AG04449 (cell line): ENCODE measurements at regions of chr22 and their contacts with region 1.

Region 1: GRCh38 chr22:41589391-41590241 is at the start of gene PMM1:
- DNase-seq: peak; percentile 95
- H3K4me3 ChIP-seq: peak within 1 kb of the TSS; percentile 97
- CTCF ChIP-seq: no peak

Region 2: DNA sequence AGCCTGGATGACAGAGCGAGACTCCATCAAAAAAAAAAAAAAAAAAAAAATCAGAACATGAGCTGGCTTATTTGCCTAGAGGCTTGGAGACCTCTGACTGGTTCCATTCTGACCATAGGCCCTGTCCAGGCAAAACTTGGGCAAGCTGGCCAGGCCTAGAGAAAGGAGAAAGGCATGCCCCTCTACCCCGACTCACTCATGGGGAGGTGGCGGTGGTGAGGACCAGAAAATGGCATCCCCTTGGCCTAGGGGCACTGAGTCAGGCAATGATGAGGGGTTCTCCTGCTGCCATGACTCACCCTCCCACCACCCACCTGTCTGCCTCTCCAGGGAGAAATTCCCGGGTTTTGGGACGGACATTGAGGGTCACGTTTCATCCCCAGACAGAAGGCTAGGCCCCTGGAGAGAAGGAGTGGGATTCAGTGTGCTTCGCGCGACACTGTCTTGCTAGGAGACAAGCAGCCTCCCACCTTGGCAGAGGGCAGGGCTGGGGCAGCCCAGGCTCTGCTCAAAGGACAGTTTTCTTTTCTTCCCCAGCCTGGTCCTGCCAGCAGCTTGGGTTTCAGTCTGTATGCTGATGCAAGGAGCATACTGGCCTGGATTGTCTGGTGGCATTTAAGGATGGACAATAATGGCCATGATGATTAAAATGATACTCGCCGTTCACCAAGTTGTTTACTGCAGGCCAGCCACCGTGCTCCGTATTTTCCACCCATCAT is 160.2 kb before region 1 on chr22:
- CTCF ChIA-PET with region 1: no interaction called
- POLR2A ChIA-PET with region 1: no interaction called
- DNase-seq: no peak
- H3K4me3 ChIP-seq: no peak overlapping the region
- CTCF ChIP-seq: no peak

Region 3: GRCh38 chr22:41557401-41558240 is 32.0 kb before region 1 on chr22:
- CTCF ChIA-PET with region 1: interaction called, 7 read pairs
- POLR2A ChIA-PET with region 1: interaction called, 17 read pairs
- DNase-seq: no peak
- H3K4me3 ChIP-seq: no peak overlapping the region
- CTCF ChIP-seq: no peak

Region 4: DNA sequence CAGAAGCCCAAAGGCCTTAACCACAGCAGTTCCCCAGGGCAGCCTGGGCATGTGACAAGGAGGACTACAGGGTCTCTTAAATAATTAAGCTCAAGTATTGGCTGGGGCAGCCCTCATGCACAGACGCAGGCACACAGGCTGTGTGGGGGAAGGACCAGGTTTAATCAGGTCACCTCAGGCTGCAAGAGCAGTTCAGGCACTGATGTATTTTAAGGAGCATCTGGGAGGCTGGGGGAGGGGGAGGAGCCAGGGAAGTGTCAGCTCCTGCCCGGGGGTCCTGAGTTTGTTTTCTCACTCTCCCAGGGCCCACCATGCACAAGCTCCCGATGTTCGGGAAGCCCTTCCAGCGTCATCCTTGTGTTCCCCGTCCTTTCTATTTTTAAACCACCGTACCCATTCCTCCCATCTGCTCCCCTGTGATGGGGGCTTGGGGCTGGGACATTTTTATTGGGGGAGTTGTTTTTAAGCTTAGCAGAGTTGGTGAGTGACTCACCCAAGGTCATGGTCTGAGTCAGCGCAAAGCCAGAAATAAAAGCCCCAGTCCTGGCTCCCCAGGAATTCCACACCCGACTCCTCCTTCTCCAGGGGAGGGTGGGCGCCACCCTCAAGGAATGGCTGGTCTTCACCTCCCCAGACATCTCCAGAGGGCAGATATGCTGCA is 26.4 kb before region 1 on chr22:
- CTCF ChIA-PET with region 1: interaction called, 3 read pairs
- POLR2A ChIA-PET with region 1: interaction called, 17 read pairs
- DNase-seq: no peak
- H3K4me3 ChIP-seq: peak overlapping the region; percentile 30
- CTCF ChIP-seq: no peak